ENCODE measurements at regions of chr11 and their contacts with region 1.

Region 1: DNA sequence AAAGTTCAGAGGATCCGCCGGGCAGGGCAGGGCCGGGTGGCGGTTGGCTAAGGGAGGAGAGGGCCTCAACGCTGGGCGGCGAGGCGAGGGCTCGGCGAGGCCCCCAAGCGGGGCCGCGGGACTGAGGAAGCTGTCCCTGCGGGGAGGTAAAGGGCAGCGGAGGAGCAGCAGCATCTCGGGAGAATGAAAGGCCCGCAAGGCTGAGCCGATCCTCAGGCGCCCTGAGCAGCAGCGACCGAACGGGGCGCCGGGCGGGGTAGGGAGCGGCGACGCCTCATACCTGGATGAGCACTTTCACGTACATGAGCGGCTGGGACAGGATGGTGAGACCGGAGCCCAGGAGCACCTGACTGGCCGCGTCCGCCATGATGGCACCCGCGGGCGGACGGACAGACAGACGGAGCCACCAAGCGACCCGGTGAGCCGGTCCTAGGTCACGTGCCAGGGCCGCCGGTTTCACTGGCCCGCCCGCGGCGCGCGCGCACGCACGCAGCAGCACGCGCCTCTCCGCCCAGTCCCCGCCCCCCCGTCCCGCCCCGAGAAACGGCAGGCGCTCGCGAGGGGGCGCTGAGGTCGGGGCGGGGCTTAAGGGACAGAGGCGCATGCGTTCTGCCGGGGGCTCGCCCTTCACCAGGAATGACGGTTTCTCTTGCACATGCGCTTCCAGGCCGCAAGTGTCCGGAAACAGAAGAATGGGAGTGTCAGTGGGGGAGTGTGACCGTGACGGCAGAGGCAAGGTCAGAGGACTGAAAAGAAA is at the start of gene MTCH2:
- DNase-seq: peak; percentile 98
- total RNA-seq, gene MTCH2: 77.4 TPM

Region 2: DNA sequence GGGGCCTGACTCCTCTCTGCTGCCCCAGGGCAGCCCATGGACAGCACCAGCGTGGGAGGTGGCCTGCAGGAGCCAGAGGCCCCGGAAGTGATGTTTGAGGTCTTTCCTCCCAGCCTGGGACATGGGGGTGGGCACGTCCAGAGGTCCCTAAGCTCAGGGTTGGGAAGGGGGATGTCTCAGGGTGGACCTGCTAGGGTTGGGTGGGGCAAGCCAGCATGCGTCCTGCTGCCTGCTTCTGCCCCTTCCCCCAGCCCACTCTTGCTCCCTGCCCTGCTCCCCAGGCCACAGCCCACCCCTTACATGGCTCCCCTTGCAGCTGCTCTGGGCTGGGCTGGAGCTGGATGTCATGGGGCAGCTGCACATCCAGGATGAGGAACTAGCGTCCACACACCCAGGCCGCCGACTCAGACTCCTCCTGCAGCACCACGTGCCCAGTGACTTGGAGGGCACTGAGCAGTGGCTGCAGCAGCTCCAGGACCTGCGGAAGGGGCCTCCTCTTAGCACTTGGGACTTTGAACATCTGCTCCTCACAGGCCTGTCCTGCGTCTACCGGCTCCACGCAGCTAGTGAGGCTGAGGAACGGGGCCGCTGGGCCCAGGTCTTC is 54.5 kb before region 1 on chr11:
- intact Hi-C with region 1: no loop called
- DNase-seq: no peak

Region 3: GRCh38 chr11:47847892-47848635 is 205.8 kb after region 1 on chr11 and contains the start of gene NUP160:
- intact Hi-C with region 1: loop called (anchors 2 kb)
- DNase-seq: peak; percentile 95
- total RNA-seq, gene NUP160: 12.8 TPM

Measured in cardiac septum (tissue), 1 donor.